ENCODE measurements at regions of chr20 and their contacts with region 1.

Region 1: DNA sequence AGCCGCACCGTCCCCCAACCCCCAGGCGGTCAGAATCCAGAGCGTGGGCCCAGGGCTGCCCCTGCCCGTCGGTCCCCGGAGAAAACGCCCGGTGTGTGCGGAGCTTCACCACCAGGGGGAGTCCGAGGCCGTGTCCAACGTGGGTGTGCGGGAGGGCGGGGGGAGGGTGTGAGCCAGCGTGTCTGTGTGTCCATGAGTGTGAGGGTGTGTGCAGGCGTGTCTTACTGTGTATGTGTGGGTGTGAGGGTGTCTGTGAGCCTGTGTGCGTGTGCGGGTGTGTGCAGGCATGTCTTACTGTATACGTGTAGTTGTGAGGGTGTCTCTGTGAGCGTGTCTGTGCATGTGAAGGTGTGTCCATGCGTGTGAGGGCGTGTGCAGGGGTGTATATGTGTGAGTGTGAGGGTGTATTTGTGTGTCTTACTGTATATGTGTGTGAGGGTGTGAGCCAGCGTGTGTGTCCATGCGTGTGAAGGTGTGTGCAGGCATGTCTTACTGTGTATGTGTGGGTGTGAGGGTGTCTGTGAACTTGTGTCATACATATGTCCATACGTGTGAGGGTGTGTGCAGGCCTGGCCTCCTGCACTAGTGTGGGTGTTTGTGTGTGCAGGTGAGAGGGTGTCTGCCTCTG is 24.6 kb upstream of the GATA5 start:
- DNase-seq: peak in 1 of 2 experiments; percentile 93
- H3K4me3 ChIP-seq: no peak overlapping the region
- H3K27ac ChIP-seq: no peak overlapping the region
- H3K4me1 ChIP-seq: peaks cover 0 to 12% (median 3%) of the 10 kb centered on the region in 4 experiments; a peak in 4 of 7 replicates
- H3K27me3 ChIP-seq: peaks cover 0 to 5% (median 2%) of the 10 kb centered on the region in 4 experiments; a peak in 2 of 7 replicates
- CTCF ChIP-seq: peak; percentile 79 to 93 (median 89)
- EP300 ChIP-seq: no peak
- POLR2A ChIP-seq: no peak
- RAD21 ChIP-seq: peak; percentile 83 to 92

Region 2: DNA sequence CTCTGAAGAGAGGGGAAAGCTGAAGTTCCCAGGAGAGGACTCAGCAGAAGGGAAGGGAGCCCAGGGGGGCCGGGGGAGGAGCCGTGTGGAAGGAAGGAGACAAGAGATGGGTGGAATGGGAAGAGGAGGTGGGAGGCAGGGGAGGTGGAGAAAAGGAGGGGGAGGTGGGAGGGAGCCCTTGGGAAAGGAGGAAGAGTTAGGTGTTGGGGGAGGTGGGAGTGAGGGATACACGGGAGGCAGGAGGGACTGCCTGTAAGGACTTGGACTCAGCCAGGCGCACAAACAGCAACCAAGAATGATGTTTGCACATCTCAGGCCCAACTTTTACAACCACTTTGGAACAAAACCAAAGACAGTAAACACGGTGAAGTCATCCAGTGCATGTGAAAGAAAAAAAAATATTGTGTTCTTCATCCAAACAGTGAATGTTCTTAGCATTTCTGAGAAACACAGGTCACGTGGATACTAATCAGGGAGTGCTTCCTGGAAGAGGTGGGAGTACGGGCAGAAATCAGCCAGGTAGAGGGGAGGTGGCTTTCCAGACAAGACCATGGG is 395.5 kb before region 1 on chr20:
- CTCF ChIA-PET with region 1: no interaction called
- POLR2A ChIA-PET with region 1: no interaction called
- DNase-seq: no peak
- H3K4me3 ChIP-seq: no peak overlapping the region
- H3K27ac ChIP-seq: no peak overlapping the region
- H3K4me1 ChIP-seq: no peaks in the 10 kb centered on the region; a peak in 1 of 7 replicates
- H3K27me3 ChIP-seq: peaks cover 0 to 3% (median under 1%) of the 10 kb centered on the region in 4 experiments; a peak in 1 of 7 replicates
- CTCF ChIP-seq: no peak
- EP300 ChIP-seq: no peak
- POLR2A ChIP-seq: no peak
- RAD21 ChIP-seq: no peak

Region 3: GRCh38 chr20:62219992-62220665 is 280.2 kb before region 1 on chr20 and contains the start of gene HRH3:
- CTCF ChIA-PET with region 1: no interaction called
- POLR2A ChIA-PET with region 1: no interaction called
- DNase-seq: peak in 1 of 2 experiments; percentile 80
- H3K4me3 ChIP-seq: peak within 1 kb of the TSS; percentile 27 to 60 (median 41)
- H3K27ac ChIP-seq: no peak within 1 kb of the TSS
- H3K4me1 ChIP-seq: peaks cover 0 to 31% (median 16%) of the 10 kb centered on the region in 4 experiments; a peak in 6 of 7 replicates
- H3K27me3 ChIP-seq: peaks cover 9 to 55% (median 42%) of the 10 kb centered on the region in 4 experiments
- CTCF ChIP-seq: no peak
- EP300 ChIP-seq: no peak
- POLR2A ChIP-seq: no peak
- RAD21 ChIP-seq: no peak
- total RNA-seq, gene HRH3: 4.4 and 4.5 TPM in 2 replicates

Region 4: GRCh38 chr20:62409931-62410745 is 90.2 kb before region 1 on chr20:
- CTCF ChIA-PET with region 1: interaction called, 48 read pairs
- POLR2A ChIA-PET with region 1: no interaction called
- DNase-seq: peak in 1 of 2 experiments; percentile 85
- H3K4me3 ChIP-seq: peak overlapping the region in 1 of 4 experiments; percentile 34; a peak in 1 of 8 replicates
- H3K27ac ChIP-seq: no peak overlapping the region
- H3K4me1 ChIP-seq: peaks cover 0 to 26% (median 8%) of the 10 kb centered on the region in 4 experiments; a peak in 6 of 7 replicates
- H3K27me3 ChIP-seq: peaks cover 0 to 8% (median 1%) of the 10 kb centered on the region in 4 experiments; a peak in 2 of 7 replicates
- CTCF ChIP-seq: peak in 2 of 3 experiments; percentile 75 to 86; a peak in 3 of 4 replicates
- EP300 ChIP-seq: no peak
- POLR2A ChIP-seq: no peak
- RAD21 ChIP-seq: peak; percentile 79 to 87

Region 5: GRCh38 chr20:62477669-62478455 is 22.5 kb before region 1 on chr20:
- CTCF ChIA-PET with region 1: interaction called, 68 read pairs
- POLR2A ChIA-PET with region 1: no interaction called
- DNase-seq: peak in 1 of 2 experiments; percentile 69
- H3K4me3 ChIP-seq: peak overlapping the region in 2 of 4 experiments; percentile 13 to 50; a peak in 4 of 8 replicates
- H3K27ac ChIP-seq: no peak overlapping the region
- H3K4me1 ChIP-seq: peaks cover 0 to 35% (median 20%) of the 10 kb centered on the region in 4 experiments; a peak in 6 of 7 replicates
- H3K27me3 ChIP-seq: peaks cover 69 to 97% (median 95%) of the 10 kb centered on the region in 4 experiments
- CTCF ChIP-seq: peak in 1 of 3 experiments; percentile 34; a peak in 2 of 4 replicates
- EP300 ChIP-seq: no peak
- POLR2A ChIP-seq: no peak
- RAD21 ChIP-seq: peak; percentile 31 to 42; a peak in 2 of 4 replicates

Region 6: GRCh38 chr20:62516345-62516744 is 16.0 kb after region 1 on chr20:
- CTCF ChIA-PET with region 1: interaction called, 24 read pairs
- POLR2A ChIA-PET with region 1: interaction called, 3 read pairs
- DNase-seq: no peak
- H3K4me3 ChIP-seq: no peak overlapping the region
- H3K27ac ChIP-seq: no peak overlapping the region
- H3K4me1 ChIP-seq: no peaks in the 10 kb centered on the region
- H3K27me3 ChIP-seq: no peaks in the 10 kb centered on the region; a peak in 1 of 7 replicates
- CTCF ChIP-seq: peak; percentile 34 to 46 (median 44)
- EP300 ChIP-seq: no peak
- POLR2A ChIP-seq: no peak
- RAD21 ChIP-seq: peak; percentile 34 to 50

Region 7: DNA sequence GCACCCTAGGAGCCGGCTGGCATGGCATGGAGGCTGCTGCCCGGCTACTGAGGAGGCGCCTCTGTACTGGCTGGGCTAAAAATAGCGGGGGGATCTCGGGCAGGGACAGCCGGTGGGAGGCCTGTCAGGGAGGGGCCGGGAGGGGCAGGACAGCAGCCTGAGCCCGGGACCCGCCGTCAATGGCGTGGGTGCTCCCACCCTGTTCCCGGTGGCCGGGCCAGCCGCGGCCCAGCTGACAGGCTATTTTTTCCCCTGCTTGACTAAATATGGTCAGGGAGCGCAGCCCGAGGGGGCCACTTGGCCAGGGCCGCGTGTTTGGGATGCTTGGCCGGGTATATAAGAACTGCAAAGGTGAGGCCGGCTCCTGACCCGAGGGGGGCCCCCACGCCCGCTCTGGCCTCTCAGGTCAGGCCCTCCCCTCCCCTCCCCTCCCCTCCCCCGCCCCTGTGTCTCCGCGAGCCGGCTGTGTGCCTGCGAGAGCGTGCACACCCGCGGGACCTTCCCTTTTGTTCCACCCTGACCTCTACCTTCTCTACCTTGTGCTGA is 49.8 kb after region 1 on chr20:
- CTCF ChIA-PET with region 1: interaction called, 11 read pairs
- POLR2A ChIA-PET with region 1: no interaction called
- DNase-seq: no peak
- H3K4me3 ChIP-seq: peak overlapping the region; percentile 17 to 65 (median 32); a peak in 5 of 8 replicates
- H3K27ac ChIP-seq: no peak overlapping the region
- H3K4me1 ChIP-seq: peaks cover 0 to 11% (median 2%) of the 10 kb centered on the region in 4 experiments; a peak in 5 of 7 replicates
- H3K27me3 ChIP-seq: peaks cover 10 to 30% (median 20%) of the 10 kb centered on the region in 4 experiments
- CTCF ChIP-seq: no peak
- EP300 ChIP-seq: no peak
- POLR2A ChIP-seq: no peak
- RAD21 ChIP-seq: no peak

Region 8: GRCh38 chr20:62611819-62612218 is 111.5 kb after region 1 on chr20:
- CTCF ChIA-PET with region 1: interaction called, 24 read pairs
- POLR2A ChIA-PET with region 1: no interaction called
- DNase-seq: no peak
- H3K4me3 ChIP-seq: no peak overlapping the region
- H3K27ac ChIP-seq: no peak overlapping the region
- H3K4me1 ChIP-seq: peaks cover 3 to 15% (median 5%) of the 10 kb centered on the region in 4 experiments
- H3K27me3 ChIP-seq: no peaks in the 10 kb centered on the region
- CTCF ChIP-seq: no peak
- EP300 ChIP-seq: no peak
- POLR2A ChIP-seq: no peak
- RAD21 ChIP-seq: no peak

Measured in H1 (cell line).